Right ventricle myocardium inferior (tissue), 1 donor: ENCODE measurements at regions of chr7 and their contacts with region 1.

Region 1: GRCh38 chr7:22110227-22110839 is 164.6 kb upstream of the CDCA7L start:
- DNase-seq: no peak
- ATAC-seq: peak; percentile 73

Region 2: DNA sequence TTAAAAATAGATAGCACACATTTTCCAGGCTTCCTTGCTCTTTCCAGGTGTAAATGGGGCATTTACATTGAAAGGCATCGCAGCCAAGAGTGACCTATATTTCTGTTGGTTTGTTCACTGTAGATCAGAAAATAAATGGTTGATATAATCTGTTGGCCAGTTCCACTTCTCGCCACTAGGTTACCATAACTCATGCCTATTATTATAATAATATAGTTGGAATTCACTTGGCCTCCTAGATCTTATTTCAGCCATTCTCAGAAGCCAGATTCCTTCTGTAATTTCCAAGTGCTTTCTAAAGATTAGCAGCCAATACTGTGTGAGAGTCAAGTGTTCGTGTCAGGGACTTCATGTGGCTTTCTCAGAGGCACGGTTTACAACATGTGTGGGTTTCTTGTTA is 388.0 kb before region 1 on chr7:
- intact Hi-C with region 1: no loop called
- DNase-seq: no peak
- ATAC-seq: no peak

Region 3: GRCh38 chr7:22214000-22214399 is 103.7 kb after region 1 on chr7:
- intact Hi-C with region 1: loop called (anchors 5 kb)
- DNase-seq: no peak
- ATAC-seq: no peak

Region 4: DNA sequence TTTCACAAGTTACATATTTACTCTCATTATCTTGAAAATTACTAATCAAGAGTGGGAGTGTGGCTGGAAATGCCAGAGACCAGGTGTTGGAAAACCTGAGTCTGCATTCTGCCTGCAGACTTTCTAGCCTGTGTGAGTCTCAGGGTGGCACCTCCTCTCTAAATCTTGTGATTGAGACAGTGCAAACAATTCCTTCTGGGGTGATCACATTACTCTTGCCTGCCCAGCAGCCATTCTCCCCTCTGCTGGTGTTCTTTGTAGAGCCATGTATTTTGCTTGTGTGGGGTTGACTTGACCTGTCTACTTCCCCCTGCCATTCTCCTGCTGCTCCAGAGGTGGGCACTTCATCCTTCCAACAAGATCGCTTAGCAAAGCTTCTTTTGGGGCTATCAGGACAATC is 145.5 kb after region 1 on chr7:
- intact Hi-C with region 1: loop called (anchors 5 kb)
- DNase-seq: no peak
- ATAC-seq: no peak

Region 5: DNA sequence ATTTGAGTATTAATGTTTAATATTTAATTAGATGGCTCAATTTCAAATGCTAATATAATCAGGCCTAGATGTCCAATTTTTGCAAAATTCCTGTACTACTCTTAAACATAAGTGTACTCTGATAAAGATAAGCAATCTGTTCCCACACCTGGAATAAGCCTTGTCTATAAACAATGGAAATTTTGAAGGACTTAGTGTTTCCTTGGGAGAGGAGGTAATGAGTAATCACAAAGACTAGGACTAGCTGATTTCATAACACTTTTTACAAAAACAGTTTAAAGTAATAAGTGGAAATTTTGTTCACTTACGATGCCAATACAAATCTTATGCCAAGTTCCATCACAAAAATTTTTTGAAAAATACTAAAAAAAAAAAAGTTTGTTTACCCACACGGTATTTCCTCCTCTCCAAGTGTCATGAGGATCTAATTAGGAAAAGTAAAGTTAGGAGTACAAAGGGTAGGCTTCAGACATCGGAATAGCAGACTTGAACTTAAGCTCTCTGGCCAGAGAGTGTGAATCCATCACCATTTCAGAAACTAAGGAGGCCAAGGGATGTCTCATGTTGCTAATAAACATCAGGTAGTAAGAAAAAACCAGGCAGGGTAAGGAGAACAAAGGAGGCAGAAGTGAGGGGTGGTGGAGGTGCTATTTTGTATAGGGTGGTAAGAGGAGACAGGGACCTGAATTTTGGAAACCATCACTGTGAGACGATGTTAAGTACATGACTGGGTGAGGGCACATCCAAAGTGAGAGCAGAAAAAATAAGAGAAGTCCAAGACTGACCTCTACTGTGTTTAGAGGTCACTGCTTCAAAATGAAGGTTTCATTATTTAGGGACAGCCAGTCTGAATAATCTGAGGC is 185.3 kb after region 1 on chr7:
- intact Hi-C with region 1: loop called (anchors 2 kb)
- DNase-seq: no peak
- ATAC-seq: peak; percentile 37

Region 6: DNA sequence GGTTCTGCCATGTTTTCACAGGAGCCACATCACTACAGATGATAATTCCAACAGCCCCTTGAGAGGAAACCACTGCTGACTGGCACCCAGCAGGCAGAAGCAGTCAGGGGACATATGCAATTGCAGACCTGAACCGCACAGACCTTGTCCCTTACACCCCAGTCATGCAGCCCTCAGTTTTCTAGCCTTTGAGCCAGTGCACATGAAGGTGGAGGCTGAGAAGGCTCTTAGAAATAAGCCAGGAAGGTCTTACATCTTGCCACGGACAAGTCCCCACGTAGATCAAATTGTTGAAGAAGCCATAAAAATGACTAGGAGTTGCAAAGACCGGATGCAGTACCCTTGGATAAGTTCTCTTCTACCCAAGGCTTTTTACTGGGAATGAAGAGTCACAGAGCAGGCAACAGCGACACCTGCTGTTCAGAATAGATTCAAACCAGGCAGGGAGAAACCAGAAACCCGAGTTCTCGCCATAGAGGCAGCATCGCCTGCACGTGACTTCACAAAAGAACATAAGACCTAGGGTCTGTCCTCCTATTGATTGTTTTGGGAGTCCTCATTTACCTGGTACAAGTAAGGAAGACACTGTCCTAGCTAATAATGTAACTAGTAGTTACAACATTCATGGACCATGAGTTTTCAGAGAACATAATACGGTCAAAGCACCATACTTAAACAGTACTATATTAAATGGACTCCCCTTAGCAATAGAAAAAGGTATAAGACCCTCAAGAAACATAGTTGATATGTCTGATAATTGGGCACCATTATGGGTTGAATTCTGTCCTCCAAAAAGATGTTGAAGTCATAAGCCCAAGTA is 378.5 kb after region 1 on chr7:
- intact Hi-C with region 1: loop called (anchors 1 kb)
- DNase-seq: no peak
- ATAC-seq: no peak